ENCODE measurements at regions of chr12 and their contacts with region 1.

Region 1: GRCh38 chr12:13211859-13212664 is 15.5 kb downstream of the EMP1 start:
- DNase-seq: peak; percentile 45 to 85 (median 72)
- ATAC-seq: peak; percentile 86
- H3K4me3 ChIP-seq: no peak overlapping the region
- H3K4me3 Mint-ChIP-seq: no peak overlapping the region
- H3K27ac ChIP-seq: no peak overlapping the region
- H3K27ac Mint-ChIP-seq: no peak overlapping the region
- H3K4me1 ChIP-seq: no peaks in the 10 kb centered on the region
- H3K4me1 Mint-ChIP-seq: peaks cover 6% of the 10 kb centered on the region
- H3K27me3 ChIP-seq: no peaks in the 10 kb centered on the region
- H3K27me3 Mint-ChIP-seq: peaks cover 7% of the 10 kb centered on the region
- CTCF ChIP-seq: peak; percentile 85

Region 2: GRCh38 chr12:11446372-11446771 is 1765.7 kb before region 1 on chr12:
- CTCF ChIA-PET with region 1: no interaction called
- POLR2A ChIA-PET with region 1: no interaction called
- intact Hi-C with region 1: no loop called
- DNase-seq: no peak
- ATAC-seq: no peak
- H3K4me3 ChIP-seq: no peak overlapping the region
- H3K4me3 Mint-ChIP-seq: no peak overlapping the region
- H3K27ac ChIP-seq: no peak overlapping the region
- H3K27ac Mint-ChIP-seq: no peak overlapping the region
- H3K4me1 ChIP-seq: no peaks in the 10 kb centered on the region
- H3K4me1 Mint-ChIP-seq: no peaks in the 10 kb centered on the region
- H3K27me3 ChIP-seq: no peaks in the 10 kb centered on the region
- H3K27me3 Mint-ChIP-seq: peaks cover 2% of the 10 kb centered on the region
- CTCF ChIP-seq: no peak

Region 3: DNA sequence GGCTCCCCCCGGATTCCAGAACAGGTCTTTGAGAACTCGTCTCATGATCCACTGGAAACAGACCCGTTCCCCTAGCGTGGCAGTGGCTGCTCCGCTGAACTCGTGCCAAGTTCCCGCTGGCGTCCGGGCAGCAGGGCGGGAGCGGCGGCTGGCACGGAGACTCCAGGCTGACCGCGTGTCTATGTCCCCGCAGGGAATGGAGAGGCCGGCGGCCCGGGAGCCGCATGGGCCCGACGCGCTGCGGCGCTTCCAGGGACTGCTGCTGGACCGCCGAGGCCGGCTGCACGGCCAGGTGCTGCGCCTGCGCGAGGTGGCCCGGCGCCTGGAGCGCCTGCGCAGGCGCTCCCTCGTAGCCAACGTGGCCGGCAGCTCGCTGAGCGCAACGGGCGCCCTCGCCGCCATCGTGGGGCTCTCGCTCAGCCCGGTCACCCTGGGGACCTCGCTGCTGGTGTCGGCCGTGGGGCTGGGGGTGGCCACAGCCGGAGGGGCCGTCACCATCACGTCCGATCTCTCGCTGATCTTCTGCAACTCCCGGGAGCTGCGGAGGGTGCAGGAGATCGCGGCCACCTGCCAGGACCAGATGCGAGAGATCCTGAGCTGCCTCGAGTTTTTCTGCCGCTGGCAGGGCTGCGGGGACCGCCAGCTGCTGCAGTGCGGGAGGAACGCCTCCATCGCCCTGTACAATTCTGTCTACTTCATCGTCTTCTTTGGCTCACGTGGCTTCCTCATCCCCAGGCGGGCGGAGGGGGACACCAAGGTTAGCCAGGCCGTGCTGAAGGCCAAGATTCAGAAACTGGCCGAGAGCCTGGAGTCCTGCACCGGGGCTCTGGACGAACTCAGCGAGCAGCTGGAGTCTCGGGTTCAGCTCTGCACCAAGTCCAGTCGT is 425.1 kb before region 1 on chr12:
- CTCF ChIA-PET with region 1: interaction called, 5 read pairs
- POLR2A ChIA-PET with region 1: no interaction called
- intact Hi-C with region 1: loop called (anchors 1 to 2 kb)
- DNase-seq: peak; percentile 47 to 90 (median 71)
- ATAC-seq: peak; percentile 90
- H3K4me3 ChIP-seq: peak overlapping the region; percentile 68 to 70
- H3K4me3 Mint-ChIP-seq: peak overlapping the region; percentile 77
- H3K27ac ChIP-seq: peak overlapping the region; percentile 72 to 73
- H3K27ac Mint-ChIP-seq: peak overlapping the region; percentile 87
- H3K4me1 ChIP-seq: peaks cover 16% of the 10 kb centered on the region
- H3K4me1 Mint-ChIP-seq: peaks cover 22% of the 10 kb centered on the region
- H3K27me3 ChIP-seq: no peaks in the 10 kb centered on the region
- H3K27me3 Mint-ChIP-seq: no peaks in the 10 kb centered on the region
- CTCF ChIP-seq: no peak

Region 4: DNA sequence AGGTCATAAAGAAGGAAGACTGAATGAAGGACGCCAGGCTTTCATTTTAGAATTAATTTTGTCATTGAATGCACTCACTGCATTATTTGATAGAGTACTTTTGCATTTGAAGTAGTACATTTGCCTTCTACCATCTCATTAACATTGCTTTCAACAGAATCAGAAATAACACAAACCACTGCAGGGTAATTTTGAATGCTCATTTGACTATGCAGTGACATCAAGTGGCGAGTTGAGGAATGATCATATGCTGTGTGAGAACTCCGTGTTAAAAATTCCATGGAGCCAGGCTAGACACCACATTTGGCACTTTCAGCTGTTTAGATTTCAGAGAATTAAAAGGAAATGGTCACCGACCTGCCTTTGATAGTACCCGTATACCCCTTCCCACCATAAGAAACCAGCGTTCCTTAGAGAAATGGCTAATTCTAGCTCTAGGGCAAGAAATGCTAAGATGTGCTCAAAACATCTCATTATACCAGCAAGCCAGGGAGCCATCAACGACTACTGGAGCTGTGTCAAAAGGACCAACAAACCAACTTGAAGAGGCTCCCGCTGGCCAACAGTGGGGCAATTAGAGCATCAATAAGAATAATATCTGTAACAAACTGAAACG is 228.5 kb before region 1 on chr12:
- CTCF ChIA-PET with region 1: interaction called, 5 read pairs
- POLR2A ChIA-PET with region 1: no interaction called
- intact Hi-C with region 1: loop called (anchors 1 to 5 kb)
- DNase-seq: peak in 1 of 9 experiments; percentile 25
- ATAC-seq: no peak
- H3K4me3 ChIP-seq: no peak overlapping the region
- H3K4me3 Mint-ChIP-seq: no peak overlapping the region
- H3K27ac ChIP-seq: no peak overlapping the region
- H3K27ac Mint-ChIP-seq: no peak overlapping the region
- H3K4me1 ChIP-seq: no peaks in the 10 kb centered on the region
- H3K4me1 Mint-ChIP-seq: no peaks in the 10 kb centered on the region
- H3K27me3 ChIP-seq: no peaks in the 10 kb centered on the region
- H3K27me3 Mint-ChIP-seq: no peaks in the 10 kb centered on the region
- CTCF ChIP-seq: no peak

Region 5: DNA sequence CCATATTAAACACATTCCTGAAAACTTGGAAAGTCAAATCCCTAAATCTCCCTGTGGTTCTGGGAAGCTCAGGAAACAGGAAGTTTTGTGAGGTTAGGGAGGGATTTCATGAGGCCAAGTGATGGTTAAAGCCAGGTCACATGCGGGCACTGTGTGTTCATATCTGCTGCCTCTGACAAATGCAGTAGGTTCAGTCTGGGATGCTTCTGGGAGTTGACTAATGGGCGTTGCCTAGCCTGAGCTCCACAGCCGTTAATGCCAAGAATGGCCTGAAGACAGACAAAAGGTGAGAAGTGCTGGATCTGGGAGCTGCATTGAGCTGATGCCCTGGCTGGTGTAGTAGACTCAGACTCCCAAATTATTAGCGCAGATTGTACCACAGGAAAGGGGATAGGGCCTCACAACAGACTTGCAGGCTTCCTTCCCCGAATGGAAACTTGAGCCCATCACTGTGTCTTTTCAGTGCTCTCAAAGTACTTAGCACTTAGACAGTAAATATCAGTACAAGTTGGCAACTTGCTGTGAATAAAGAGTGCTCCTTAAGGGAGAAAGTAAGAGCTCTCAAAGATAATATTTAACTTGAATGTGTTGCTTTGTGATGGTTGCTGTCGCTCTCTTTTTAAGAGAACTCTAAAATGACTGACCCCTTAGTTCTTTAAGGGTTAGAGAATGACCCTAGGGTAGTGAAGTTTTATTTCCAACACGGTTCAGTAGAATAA is 125.9 kb before region 1 on chr12:
- CTCF ChIA-PET with region 1: interaction called, 24 read pairs
- POLR2A ChIA-PET with region 1: no interaction called
- intact Hi-C with region 1: no loop called
- DNase-seq: no peak
- ATAC-seq: no peak
- H3K4me3 ChIP-seq: no peak overlapping the region
- H3K4me3 Mint-ChIP-seq: no peak overlapping the region
- H3K27ac ChIP-seq: no peak overlapping the region
- H3K27ac Mint-ChIP-seq: no peak overlapping the region
- H3K4me1 ChIP-seq: no peaks in the 10 kb centered on the region
- H3K4me1 Mint-ChIP-seq: no peaks in the 10 kb centered on the region
- H3K27me3 ChIP-seq: no peaks in the 10 kb centered on the region
- H3K27me3 Mint-ChIP-seq: no peaks in the 10 kb centered on the region
- CTCF ChIP-seq: no peak

Region 6: DNA sequence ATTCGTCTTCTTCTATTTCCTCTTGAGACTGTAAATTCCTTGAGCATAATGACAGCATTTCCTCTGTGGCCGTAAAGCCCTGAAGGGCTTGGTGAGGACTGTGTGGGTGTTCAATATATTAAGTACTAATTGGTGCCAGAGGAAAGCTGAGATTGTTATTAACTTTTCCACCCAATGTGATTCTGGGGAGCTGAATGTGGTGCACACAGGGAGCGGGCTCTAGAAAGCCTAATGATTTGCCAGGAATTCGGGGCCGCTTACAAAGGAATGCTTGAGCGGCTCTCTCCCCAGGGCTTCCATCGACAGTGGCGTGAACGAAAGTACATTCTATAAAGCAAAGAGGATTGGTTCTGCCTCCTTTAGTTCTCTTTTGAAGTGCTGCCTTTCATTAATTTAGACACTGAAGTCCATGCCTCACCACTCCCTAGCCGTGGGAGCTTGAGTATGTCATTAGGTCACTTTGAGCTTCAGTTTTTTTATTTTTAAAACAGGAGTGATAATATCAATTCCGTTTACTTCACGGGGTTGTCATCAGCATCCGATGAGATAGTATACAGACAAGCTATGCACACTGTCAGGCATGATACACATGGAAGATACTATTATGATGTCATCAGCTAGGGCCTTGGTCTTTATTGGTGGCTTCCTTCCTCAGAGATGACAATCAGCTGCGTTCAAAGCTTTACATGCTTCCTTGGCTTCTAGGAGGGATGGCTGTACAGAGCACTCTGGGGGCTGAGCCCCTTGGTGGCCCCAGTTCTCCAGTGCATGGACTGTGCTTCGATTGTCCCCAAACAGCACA is 97.6 kb before region 1 on chr12:
- CTCF ChIA-PET with region 1: interaction called, 22 read pairs
- POLR2A ChIA-PET with region 1: no interaction called
- intact Hi-C with region 1: no loop called
- DNase-seq: no peak
- ATAC-seq: no peak
- H3K4me3 ChIP-seq: no peak overlapping the region
- H3K4me3 Mint-ChIP-seq: no peak overlapping the region
- H3K27ac ChIP-seq: no peak overlapping the region
- H3K27ac Mint-ChIP-seq: no peak overlapping the region
- H3K4me1 ChIP-seq: no peaks in the 10 kb centered on the region
- H3K4me1 Mint-ChIP-seq: no peaks in the 10 kb centered on the region
- H3K27me3 ChIP-seq: no peaks in the 10 kb centered on the region
- H3K27me3 Mint-ChIP-seq: peaks cover 14% of the 10 kb centered on the region
- CTCF ChIP-seq: no peak

Region 7: GRCh38 chr12:13179211-13180074 is 32.6 kb before region 1 on chr12:
- CTCF ChIA-PET with region 1: interaction called, 18 read pairs
- POLR2A ChIA-PET with region 1: no interaction called
- intact Hi-C with region 1: no loop called
- DNase-seq: peak; percentile 12 to 69 (median 56)
- ATAC-seq: peak; percentile 89
- H3K4me3 ChIP-seq: peak overlapping the region; percentile 4 to 38
- H3K4me3 Mint-ChIP-seq: peak overlapping the region; percentile 77
- H3K27ac ChIP-seq: no peak overlapping the region
- H3K27ac Mint-ChIP-seq: peak overlapping the region; percentile 46
- H3K4me1 ChIP-seq: peaks cover 14% of the 10 kb centered on the region
- H3K4me1 Mint-ChIP-seq: peaks cover 19% of the 10 kb centered on the region
- H3K27me3 ChIP-seq: no peaks in the 10 kb centered on the region
- H3K27me3 Mint-ChIP-seq: peaks cover 5% of the 10 kb centered on the region
- CTCF ChIP-seq: no peak

Region 8: DNA sequence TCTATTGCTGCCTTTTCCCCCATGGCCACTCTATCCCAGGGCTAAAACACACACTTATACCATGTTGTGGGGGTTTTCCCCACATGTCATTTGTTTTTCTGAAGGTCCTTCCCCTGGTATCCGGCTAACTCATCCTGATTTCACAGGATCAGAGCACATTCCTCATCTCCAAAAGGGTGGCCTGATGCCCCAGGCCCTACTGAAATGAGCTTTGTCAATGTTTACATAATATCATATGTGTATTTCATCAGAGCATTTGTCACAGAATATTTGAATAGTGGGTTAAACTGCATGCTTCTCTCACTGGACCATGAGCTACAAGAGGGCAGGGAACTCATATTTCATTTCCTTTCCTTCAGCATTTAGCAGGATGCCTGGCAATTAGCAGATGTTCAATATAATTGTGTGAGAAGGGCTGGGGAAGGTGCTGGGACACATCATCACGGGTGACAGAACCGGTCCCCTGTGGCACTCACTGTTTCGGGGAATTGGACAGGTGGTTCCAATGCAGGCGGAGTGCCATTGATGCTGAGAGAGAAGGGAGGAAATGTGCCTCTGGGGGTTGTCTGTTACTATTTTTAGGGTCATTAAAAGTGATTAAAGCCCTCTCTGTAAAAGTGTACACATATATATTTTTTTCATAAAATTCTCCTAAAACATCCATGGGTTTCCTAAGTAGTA is 11.3 kb after region 1 on chr12:
- CTCF ChIA-PET with region 1: interaction called, 48 read pairs
- POLR2A ChIA-PET with region 1: no interaction called
- intact Hi-C with region 1: no loop called
- DNase-seq: no peak
- ATAC-seq: no peak
- H3K4me3 ChIP-seq: no peak overlapping the region
- H3K4me3 Mint-ChIP-seq: no peak overlapping the region
- H3K27ac ChIP-seq: no peak overlapping the region
- H3K27ac Mint-ChIP-seq: no peak overlapping the region
- H3K4me1 ChIP-seq: no peaks in the 10 kb centered on the region
- H3K4me1 Mint-ChIP-seq: no peaks in the 10 kb centered on the region
- H3K27me3 ChIP-seq: peaks cover 0 to 3% of the 10 kb centered on the region in 2 experiments
- H3K27me3 Mint-ChIP-seq: peaks cover 22% of the 10 kb centered on the region
- CTCF ChIP-seq: no peak

Region 9: DNA sequence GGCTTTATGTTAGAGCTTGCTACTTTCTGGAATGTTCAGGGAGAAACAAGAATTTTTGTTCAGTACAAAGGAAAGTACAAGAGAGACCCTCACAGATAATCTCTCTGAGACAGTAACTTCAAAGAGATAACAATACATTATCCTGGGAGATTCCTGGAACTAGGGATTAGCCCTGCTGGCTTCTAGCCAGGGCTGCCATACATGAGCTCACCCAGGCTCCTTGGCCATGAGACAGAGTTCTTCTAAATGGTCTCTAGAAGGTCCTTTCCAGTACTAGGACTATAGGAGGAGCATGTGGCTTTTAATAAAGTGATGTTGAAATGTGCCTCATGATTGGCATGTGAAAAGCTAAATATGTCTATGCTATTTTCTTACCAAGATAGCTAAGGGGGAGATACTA is 327.0 kb after region 1 on chr12:
- CTCF ChIA-PET with region 1: no interaction called
- POLR2A ChIA-PET with region 1: no interaction called
- intact Hi-C with region 1: no loop called
- DNase-seq: no peak
- ATAC-seq: no peak
- H3K4me3 ChIP-seq: no peak overlapping the region
- H3K4me3 Mint-ChIP-seq: no peak overlapping the region
- H3K27ac ChIP-seq: no peak overlapping the region
- H3K27ac Mint-ChIP-seq: no peak overlapping the region
- H3K4me1 ChIP-seq: no peaks in the 10 kb centered on the region
- H3K4me1 Mint-ChIP-seq: no peaks in the 10 kb centered on the region
- H3K27me3 ChIP-seq: no peaks in the 10 kb centered on the region
- H3K27me3 Mint-ChIP-seq: peaks cover 8% of the 10 kb centered on the region
- CTCF ChIP-seq: no peak

Region 10: GRCh38 chr12:13772264-13772663 is 560.2 kb after region 1 on chr12:
- CTCF ChIA-PET with region 1: no interaction called
- POLR2A ChIA-PET with region 1: no interaction called
- intact Hi-C with region 1: no loop called
- DNase-seq: no peak
- ATAC-seq: no peak
- H3K4me3 ChIP-seq: no peak overlapping the region
- H3K4me3 Mint-ChIP-seq: no peak overlapping the region
- H3K27ac ChIP-seq: no peak overlapping the region
- H3K27ac Mint-ChIP-seq: no peak overlapping the region
- H3K4me1 ChIP-seq: no peaks in the 10 kb centered on the region
- H3K4me1 Mint-ChIP-seq: no peaks in the 10 kb centered on the region
- H3K27me3 ChIP-seq: no peaks in the 10 kb centered on the region
- H3K27me3 Mint-ChIP-seq: peaks cover 5% of the 10 kb centered on the region
- CTCF ChIP-seq: no peak

Region 11: DNA sequence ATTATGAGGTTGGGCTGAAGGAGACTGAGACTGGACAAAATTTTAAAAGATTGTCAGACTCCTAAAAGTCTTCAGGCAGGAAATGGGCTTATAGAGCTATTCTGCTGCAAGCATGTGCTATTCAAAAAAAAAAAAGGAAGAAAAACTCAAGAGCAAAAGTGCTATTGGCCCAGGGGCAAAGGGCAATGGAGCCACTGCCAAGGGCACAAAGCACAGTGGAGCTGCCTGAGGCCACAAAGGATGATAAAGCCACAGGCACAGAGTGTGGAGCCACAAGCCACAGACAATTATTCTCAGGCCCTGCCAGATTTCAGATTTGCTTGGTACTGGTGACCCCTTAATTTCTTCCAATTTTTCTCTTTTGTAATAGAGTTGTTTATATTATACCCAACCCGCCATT is 798.9 kb after region 1 on chr12:
- CTCF ChIA-PET with region 1: no interaction called
- POLR2A ChIA-PET with region 1: no interaction called
- intact Hi-C with region 1: no loop called
- DNase-seq: no peak
- ATAC-seq: no peak
- H3K4me3 ChIP-seq: no peak overlapping the region
- H3K4me3 Mint-ChIP-seq: no peak overlapping the region
- H3K27ac ChIP-seq: no peak overlapping the region
- H3K27ac Mint-ChIP-seq: no peak overlapping the region
- H3K4me1 ChIP-seq: no peaks in the 10 kb centered on the region
- H3K4me1 Mint-ChIP-seq: no peaks in the 10 kb centered on the region
- H3K27me3 ChIP-seq: no peaks in the 10 kb centered on the region
- H3K27me3 Mint-ChIP-seq: peaks cover 7% of the 10 kb centered on the region
- CTCF ChIP-seq: no peak